ENCODE measurements at regions of chr20 and their contacts with region 1.

Region 1: DNA sequence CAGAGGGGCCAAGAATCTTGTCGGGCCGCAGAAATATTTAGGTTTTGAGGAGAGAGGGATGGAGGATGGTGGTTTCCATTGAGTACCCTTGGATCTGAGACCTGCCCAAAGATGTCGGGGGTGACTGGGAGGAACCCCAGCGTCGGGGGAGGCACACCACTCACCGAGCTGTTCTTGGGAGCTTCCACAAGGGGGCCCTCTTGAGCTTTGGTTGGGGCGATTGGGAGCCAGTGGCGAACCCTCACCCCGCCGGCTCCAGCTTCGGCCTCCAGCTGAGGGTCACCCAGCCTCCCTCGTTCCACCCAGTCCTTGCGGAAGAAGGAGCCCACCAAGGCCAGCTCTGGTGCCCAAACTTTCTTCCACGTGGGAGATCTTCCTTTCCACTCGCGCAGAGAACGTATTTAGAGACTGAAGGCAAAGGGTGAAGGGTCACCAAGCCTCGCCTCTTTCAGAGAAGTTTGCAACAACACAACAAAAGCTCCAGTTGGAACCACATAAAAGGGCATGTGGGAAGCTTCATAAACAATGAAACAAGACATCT is 33.6 kb downstream of the APCDD1L start:
- DNase-seq: peak; percentile 29
- H3K4me3 ChIP-seq: no peak overlapping the region
- H3K27ac ChIP-seq: no peak overlapping the region
- H3K4me1 ChIP-seq: peaks cover 4% of the 10 kb centered on the region
- H3K27me3 ChIP-seq: no peaks in the 10 kb centered on the region
- CTCF ChIP-seq: peak; percentile 29 to 68

Region 2: DNA sequence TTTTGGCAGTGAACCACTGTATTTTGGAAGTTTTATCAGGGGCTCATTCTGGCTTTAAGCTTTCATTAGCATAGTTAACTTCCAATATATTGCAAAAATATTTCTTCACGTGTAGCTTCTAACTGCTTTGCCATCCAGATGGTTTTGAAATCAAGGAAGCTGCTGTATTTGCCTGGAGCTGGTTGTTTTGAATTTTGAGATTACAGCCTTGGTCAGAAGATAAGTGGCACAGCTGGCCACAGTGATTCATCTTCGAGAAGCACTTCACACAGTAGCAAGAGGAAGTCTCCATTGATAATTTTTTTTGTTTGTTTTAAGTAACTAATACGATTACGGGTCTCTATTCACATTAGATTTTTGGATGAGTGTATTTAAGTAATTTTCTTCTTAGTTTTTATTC is 29.8 kb after region 1 on chr20:
- CTCF ChIA-PET with region 1: no interaction called
- dilution Hi-C with region 1: loop called (anchors 5 kb)
- in situ Hi-C with region 1: no loop called
- intact Hi-C with region 1: no loop called
- DNase-seq: peak; percentile 18
- H3K4me3 ChIP-seq: no peak overlapping the region
- H3K27ac ChIP-seq: no peak overlapping the region
- H3K4me1 ChIP-seq: peaks cover 14% of the 10 kb centered on the region
- H3K27me3 ChIP-seq: peaks cover 5% of the 10 kb centered on the region
- CTCF ChIP-seq: no peak

Region 3: GRCh38 chr20:58839474-58839874 is 357.9 kb after region 1 on chr20:
- CTCF ChIA-PET with region 1: no interaction called
- dilution Hi-C with region 1: no loop called
- in situ Hi-C with region 1: no loop called
- intact Hi-C with region 1: loop called (anchors 1 kb)
- DNase-seq: peak; percentile 16
- H3K4me3 ChIP-seq: peak overlapping the region; percentile 6 to 24 (median 22)
- H3K27ac ChIP-seq: no peak overlapping the region
- H3K4me1 ChIP-seq: no peaks in the 10 kb centered on the region
- H3K27me3 ChIP-seq: peaks cover 9% of the 10 kb centered on the region
- CTCF ChIP-seq: peak in 1 of 2 donors; percentile 54

Measured in mammary epithelial cell (primary cell).